Activated CD4-positive, alpha-beta memory T cell treated with anti-CD3 and anti-CD28 coated beads for 36 hours (primary cell): ENCODE measurements at regions of chr1 and their contacts with region 1.

Region 1: GRCh38 chr1:214123061-214123784 is 135.4 kb downstream of the PROX1 start:
- DNase-seq: peak; percentile 15
- H3K4me3 Mint-ChIP-seq: no peak overlapping the region
- H3K27ac Mint-ChIP-seq: no peak overlapping the region
- H3K4me1 Mint-ChIP-seq: no peaks in the 10 kb centered on the region
- H3K27me3 Mint-ChIP-seq: peaks cover 3% of the 10 kb centered on the region

Region 2: DNA sequence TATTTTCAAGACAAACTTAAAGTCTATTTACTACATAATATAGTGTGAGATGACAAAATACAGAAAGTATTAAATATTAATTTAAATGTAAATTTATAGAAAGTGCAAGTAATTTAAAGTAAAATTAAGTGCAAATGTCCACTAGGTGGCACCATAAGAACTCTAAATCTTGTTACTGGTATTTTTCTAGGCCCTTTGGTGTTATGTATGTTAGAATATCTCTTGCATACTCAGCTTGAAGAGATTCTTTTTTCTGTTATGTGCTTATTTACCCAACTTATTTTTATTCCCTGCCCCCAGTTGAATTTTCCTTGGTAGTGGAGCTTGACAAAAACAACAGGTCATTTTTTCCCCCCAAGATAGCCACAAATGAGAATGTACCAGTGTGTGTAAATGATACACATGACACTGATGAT is 1000.7 kb before region 1 on chr1:
- CTCF ChIA-PET with region 1: no interaction called
- POLR2A ChIA-PET with region 1: no interaction called
- intact Hi-C with region 1: loop called (anchors 5 kb)
- DNase-seq: no peak
- H3K4me3 Mint-ChIP-seq: no peak overlapping the region
- H3K27ac Mint-ChIP-seq: no peak overlapping the region
- H3K4me1 Mint-ChIP-seq: peaks cover 2% of the 10 kb centered on the region
- H3K27me3 Mint-ChIP-seq: no peaks in the 10 kb centered on the region

Region 3: DNA sequence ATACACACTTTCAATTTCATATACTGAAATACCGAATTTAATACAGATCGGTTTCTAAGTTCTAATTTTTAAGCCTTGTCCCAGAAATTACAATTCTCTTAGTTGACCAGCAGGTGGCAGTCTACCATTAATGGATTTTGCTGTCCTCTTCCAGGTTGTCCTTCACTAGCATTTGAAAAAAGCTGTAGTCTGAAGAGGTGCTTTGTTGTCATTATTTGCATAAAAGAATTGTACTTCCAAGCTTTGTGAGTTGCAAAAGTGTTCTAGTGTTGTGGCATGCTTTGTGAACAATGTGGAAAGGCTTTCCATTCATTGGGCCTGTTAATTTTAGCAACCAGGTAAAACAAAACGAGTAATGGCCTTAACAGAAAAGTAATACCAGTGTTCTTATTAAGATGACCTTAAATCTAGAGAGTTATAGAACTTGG is 878.5 kb before region 1 on chr1:
- CTCF ChIA-PET with region 1: no interaction called
- POLR2A ChIA-PET with region 1: no interaction called
- intact Hi-C with region 1: loop called (anchors 5 kb)
- DNase-seq: peak; percentile 10
- H3K4me3 Mint-ChIP-seq: no peak overlapping the region
- H3K27ac Mint-ChIP-seq: no peak overlapping the region
- H3K4me1 Mint-ChIP-seq: no peaks in the 10 kb centered on the region
- H3K27me3 Mint-ChIP-seq: no peaks in the 10 kb centered on the region

Region 4: GRCh38 chr1:213374369-213374768 is 748.9 kb before region 1 on chr1:
- CTCF ChIA-PET with region 1: no interaction called
- POLR2A ChIA-PET with region 1: no interaction called
- intact Hi-C with region 1: loop called (anchors 1 kb)
- DNase-seq: peak; percentile 68
- H3K4me3 Mint-ChIP-seq: no peak overlapping the region
- H3K27ac Mint-ChIP-seq: no peak overlapping the region
- H3K4me1 Mint-ChIP-seq: no peaks in the 10 kb centered on the region
- H3K27me3 Mint-ChIP-seq: no peaks in the 10 kb centered on the region

Region 5: GRCh38 chr1:213669964-213670691 is 453.1 kb before region 1 on chr1:
- CTCF ChIA-PET with region 1: no interaction called
- POLR2A ChIA-PET with region 1: no interaction called
- intact Hi-C with region 1: loop called (anchors 2 kb)
- DNase-seq: peak; percentile 11
- H3K4me3 Mint-ChIP-seq: no peak overlapping the region
- H3K27ac Mint-ChIP-seq: no peak overlapping the region
- H3K4me1 Mint-ChIP-seq: peaks cover 6% of the 10 kb centered on the region
- H3K27me3 Mint-ChIP-seq: no peaks in the 10 kb centered on the region

Region 6: GRCh38 chr1:213914392-213914791 is 208.8 kb before region 1 on chr1:
- CTCF ChIA-PET with region 1: no interaction called
- POLR2A ChIA-PET with region 1: no interaction called
- intact Hi-C with region 1: no loop called
- DNase-seq: no peak
- H3K4me3 Mint-ChIP-seq: no peak overlapping the region
- H3K27ac Mint-ChIP-seq: no peak overlapping the region
- H3K4me1 Mint-ChIP-seq: no peaks in the 10 kb centered on the region
- H3K27me3 Mint-ChIP-seq: no peaks in the 10 kb centered on the region

Region 7: DNA sequence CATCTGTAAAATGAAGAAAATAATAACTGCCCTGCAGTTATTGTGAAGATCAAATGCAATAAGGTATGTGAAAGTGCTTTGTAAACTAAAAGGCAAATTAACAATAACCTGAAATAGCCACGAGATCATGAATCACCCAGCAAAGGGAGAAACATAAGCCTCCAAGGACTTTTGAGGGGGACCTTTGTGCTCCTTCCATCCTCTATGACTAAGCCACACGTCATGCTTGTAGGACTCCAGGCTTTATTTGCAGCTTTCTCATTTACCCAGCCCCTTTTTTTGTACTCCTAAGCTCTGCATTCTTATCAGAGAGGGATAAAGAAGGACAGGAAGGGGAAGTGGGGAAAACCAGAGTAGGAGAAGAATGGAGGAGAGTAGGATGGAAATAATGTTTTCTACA is 20.3 kb before region 1 on chr1:
- CTCF ChIA-PET with region 1: no interaction called
- POLR2A ChIA-PET with region 1: no interaction called
- intact Hi-C with region 1: no loop called
- DNase-seq: no peak
- H3K4me3 Mint-ChIP-seq: no peak overlapping the region
- H3K27ac Mint-ChIP-seq: no peak overlapping the region
- H3K4me1 Mint-ChIP-seq: no peaks in the 10 kb centered on the region
- H3K27me3 Mint-ChIP-seq: no peaks in the 10 kb centered on the region